Pancreas (tissue), 10 donors: ENCODE measurements at regions of chr4 and their contacts with region 1.

Region 1: GRCh38 chr4:90293320-90293719 is 166.1 kb downstream of the CCSER1 start:
- DNase-seq: no peak
- ATAC-seq: no peak
- H3K4me3 ChIP-seq: no peak overlapping the region
- H3K27ac ChIP-seq: no peak overlapping the region
- H3K4me1 ChIP-seq: no peaks in the 10 kb centered on the region
- H3K27me3 ChIP-seq: no peaks in the 10 kb centered on the region
- CTCF ChIP-seq: peak in 2 of 4 donors; percentile 24 to 38

Region 2: DNA sequence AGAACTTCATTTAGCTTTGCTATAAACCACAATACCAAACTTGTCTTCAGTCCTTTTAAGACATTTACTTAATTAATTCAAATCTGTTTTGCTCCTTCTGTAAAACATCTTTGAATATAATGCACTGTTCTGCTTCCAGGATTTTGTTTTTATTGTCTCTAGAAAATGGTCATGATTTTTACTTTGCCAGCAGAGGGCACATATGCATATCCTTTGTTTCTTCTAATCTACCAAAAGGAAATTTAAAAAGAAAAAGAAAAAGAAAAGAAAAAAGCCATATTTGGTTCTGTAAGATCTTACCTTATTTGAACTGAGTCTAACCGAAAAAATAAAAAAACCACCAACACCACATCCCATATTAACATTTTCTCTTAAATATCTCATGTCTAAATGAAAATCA is 268.1 kb before region 1 on chr4:
- intact Hi-C with region 1: loop called in 1 of 3 experiments (anchors 10 kb)
- DNase-seq: no peak
- ATAC-seq: no peak
- H3K4me3 ChIP-seq: no peak overlapping the region
- H3K27ac ChIP-seq: no peak overlapping the region
- H3K4me1 ChIP-seq: no peaks in the 10 kb centered on the region
- H3K27me3 ChIP-seq: no peaks in the 10 kb centered on the region
- CTCF ChIP-seq: peak in 1 of 4 donors; percentile 23